ENCODE measurements at regions of chr5 and their contacts with region 1.

Region 1: GRCh38 chr5:96957254-96958049 is 21.6 kb downstream of the LNPEP start:
- DNase-seq: peak; percentile 45
- ATAC-seq: peak; percentile 73
- H3K4me3 ChIP-seq: peak overlapping the region; percentile 72
- H3K27ac ChIP-seq: peak overlapping the region; percentile 84
- H3K4me1 ChIP-seq: peaks cover 32% of the 10 kb centered on the region
- H3K27me3 ChIP-seq: no peaks in the 10 kb centered on the region
- CTCF ChIP-seq: no peak
- EP300 ChIP-seq: 0 out of 4 replicates have a peak, but pooled peaks of 1 of the 2 experiments have one; percentile 43
- POLR2A ChIP-seq: no peak
- RAD21 ChIP-seq: no peak

Region 2: GRCh38 chr5:96876292-96876850 is 81.1 kb before region 1 on chr5 and contains the start of gene ERAP2:
- CTCF ChIA-PET with region 1: interaction called, 6 read pairs
- POLR2A ChIA-PET with region 1: interaction called, 16 read pairs
- RAD21 ChIA-PET with region 1: interaction called, 136 read pairs
- SMC1A ChIA-PET with region 1: interaction called, 74 read pairs
- in situ Hi-C with region 1: no loop called
- intact Hi-C with region 1: no loop called
- DNase-seq: no peak
- ATAC-seq: peak; percentile 58
- H3K4me3 ChIP-seq: peak within 1 kb of the TSS; percentile 86
- H3K27ac ChIP-seq: peak within 1 kb of the TSS; percentile 86
- H3K4me1 ChIP-seq: peaks cover 33% of the 10 kb centered on the region
- H3K27me3 ChIP-seq: no peaks in the 10 kb centered on the region
- CTCF ChIP-seq: no peak
- EP300 ChIP-seq: peak in 1 of 2 experiments; percentile 35; a peak in 1 of 4 replicates
- POLR2A ChIP-seq: no peak
- RAD21 ChIP-seq: no peak
- polyA plus RNA-seq, gene ERAP2: 4.0 to 4.3 TPM

Region 3: DNA sequence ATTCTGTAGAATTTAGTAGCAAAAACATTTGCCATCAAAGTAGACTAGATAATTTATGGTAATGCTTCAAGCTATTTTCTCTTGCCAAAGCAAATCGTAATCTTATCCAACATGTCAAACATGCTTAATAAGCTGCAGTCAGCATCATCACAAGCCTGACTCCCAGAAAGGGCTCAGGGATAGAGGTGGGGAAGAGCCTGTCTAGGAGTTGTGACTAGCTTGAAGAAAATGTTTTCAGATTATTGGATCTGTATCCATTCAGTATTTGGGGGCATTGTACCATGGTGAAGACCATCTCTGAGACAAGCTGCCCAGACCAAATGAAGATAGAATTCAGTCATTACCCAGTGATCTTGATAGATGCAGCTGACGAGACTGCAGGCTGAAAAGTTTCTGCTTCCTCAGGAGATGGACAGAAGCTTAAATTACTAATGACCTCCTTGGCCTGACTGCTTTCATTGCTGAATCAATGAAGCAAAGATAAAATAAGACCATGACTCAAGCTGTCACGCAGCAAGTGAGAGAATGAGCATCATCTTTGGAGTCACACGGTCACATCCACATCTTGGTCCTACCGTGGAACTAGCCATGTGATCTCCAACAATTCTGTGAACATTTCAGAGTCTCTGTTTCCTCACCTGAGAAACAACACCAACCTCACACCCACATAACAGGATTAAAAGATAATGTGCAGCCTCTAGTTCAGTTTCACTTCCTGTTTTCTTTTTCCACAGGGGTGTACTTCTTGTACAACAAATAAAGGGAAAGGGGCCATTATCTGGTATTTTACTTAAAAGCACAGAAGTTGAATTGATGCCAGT is 71.7 kb before region 1 on chr5:
- CTCF ChIA-PET with region 1: interaction called, 6 read pairs
- POLR2A ChIA-PET with region 1: interaction called, 7 read pairs
- RAD21 ChIA-PET with region 1: interaction called, 5 read pairs
- SMC1A ChIA-PET with region 1: interaction called, 10 read pairs
- in situ Hi-C with region 1: no loop called
- intact Hi-C with region 1: no loop called
- DNase-seq: peak; percentile 92
- ATAC-seq: peak; percentile 88
- H3K4me3 ChIP-seq: peak overlapping the region; percentile 31
- H3K27ac ChIP-seq: peak overlapping the region; percentile 71
- H3K4me1 ChIP-seq: peaks cover 33% of the 10 kb centered on the region
- H3K27me3 ChIP-seq: no peaks in the 10 kb centered on the region
- CTCF ChIP-seq: no peak
- EP300 ChIP-seq: peak; percentile 84 to 88; a peak in 2 of 4 replicates
- POLR2A ChIP-seq: no peak
- RAD21 ChIP-seq: no peak

Region 4: DNA sequence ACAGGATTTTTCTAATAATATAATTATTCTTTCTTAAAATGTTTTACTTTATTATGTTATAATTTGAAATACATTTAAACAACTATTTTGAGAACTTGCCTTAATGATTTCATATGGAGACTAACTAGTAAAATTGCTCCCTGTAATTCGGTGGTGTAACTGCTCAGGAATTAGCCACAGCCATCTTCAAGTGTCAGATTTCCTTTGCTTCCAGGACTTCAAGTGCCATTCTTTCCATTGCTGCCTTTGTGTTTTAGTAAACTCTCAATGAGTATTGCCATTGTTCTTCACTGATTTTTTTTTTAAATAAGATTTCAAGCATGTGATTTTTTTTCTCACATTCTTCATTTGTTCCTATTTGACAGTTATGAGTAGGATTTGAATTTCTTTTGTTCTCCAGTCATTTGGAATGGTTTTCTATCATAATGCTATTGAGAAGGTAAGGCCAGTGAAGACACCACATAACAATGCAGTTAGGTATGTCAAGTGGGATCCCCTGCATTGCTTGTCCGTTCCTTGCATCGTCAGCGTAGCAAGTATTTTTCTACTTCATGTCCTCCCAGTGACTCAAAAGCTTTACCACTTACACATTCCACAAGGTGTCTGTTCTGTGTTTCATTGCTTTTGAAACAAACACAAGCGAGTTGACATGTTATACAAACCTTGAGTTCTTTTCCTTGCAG is 62.1 kb after region 1 on chr5:
- CTCF ChIA-PET with region 1: no interaction called
- POLR2A ChIA-PET with region 1: no interaction called
- RAD21 ChIA-PET with region 1: no interaction called
- SMC1A ChIA-PET with region 1: no interaction called
- in situ Hi-C with region 1: no loop called
- intact Hi-C with region 1: no loop called
- DNase-seq: no peak
- ATAC-seq: no peak
- H3K4me3 ChIP-seq: no peak overlapping the region
- H3K27ac ChIP-seq: no peak overlapping the region
- H3K4me1 ChIP-seq: peaks cover 5% of the 10 kb centered on the region; the same call in 1 of the 2 replicates
- H3K27me3 ChIP-seq: no peaks in the 10 kb centered on the region
- CTCF ChIP-seq: no peak
- EP300 ChIP-seq: no peak
- POLR2A ChIP-seq: no peak
- RAD21 ChIP-seq: no peak